CD8-positive, alpha-beta memory T cell (primary cell): ENCODE measurements at regions of chr15 and their contacts with region 1.

Region 1: GRCh38 chr15:80989518-80990478 is at the start of gene MESD:
- DNase-seq: peak; percentile 93 to 97 (median 97)
- H3K4me3 ChIP-seq: peak within 1 kb of the TSS; percentile 72
- H3K4me3 Mint-ChIP-seq: peak within 1 kb of the TSS; percentile 97 to 99 (median 98)
- H3K27ac ChIP-seq: peak within 1 kb of the TSS; percentile 88
- H3K27ac Mint-ChIP-seq: peak within 1 kb of the TSS; percentile 91 to 99 (median 99)
- H3K4me1 ChIP-seq: peaks cover 61% of the 10 kb centered on the region
- H3K4me1 Mint-ChIP-seq: peaks cover 44 to 61% (median 57%) of the 10 kb centered on the region in 3 donors
- H3K27me3 ChIP-seq: no peaks in the 10 kb centered on the region
- H3K27me3 Mint-ChIP-seq: no peaks in the 10 kb centered on the region
- total RNA-seq, gene MESD: 25.7 to 30.5 TPM

Region 2: GRCh38 chr15:80934761-80935221 is 55.0 kb before region 1 on chr15:
- CTCF ChIA-PET with region 1: no interaction called
- POLR2A ChIA-PET with region 1: no interaction called
- DNase-seq: no peak
- H3K4me3 ChIP-seq: no peak overlapping the region
- H3K4me3 Mint-ChIP-seq: no peak overlapping the region
- H3K27ac ChIP-seq: no peak overlapping the region
- H3K27ac Mint-ChIP-seq: no peak overlapping the region
- H3K4me1 ChIP-seq: no peaks in the 10 kb centered on the region
- H3K4me1 Mint-ChIP-seq: peaks cover 0 to 4% (median 4%) of the 10 kb centered on the region in 3 donors
- H3K27me3 ChIP-seq: no peaks in the 10 kb centered on the region
- H3K27me3 Mint-ChIP-seq: no peaks in the 10 kb centered on the region

Region 3: DNA sequence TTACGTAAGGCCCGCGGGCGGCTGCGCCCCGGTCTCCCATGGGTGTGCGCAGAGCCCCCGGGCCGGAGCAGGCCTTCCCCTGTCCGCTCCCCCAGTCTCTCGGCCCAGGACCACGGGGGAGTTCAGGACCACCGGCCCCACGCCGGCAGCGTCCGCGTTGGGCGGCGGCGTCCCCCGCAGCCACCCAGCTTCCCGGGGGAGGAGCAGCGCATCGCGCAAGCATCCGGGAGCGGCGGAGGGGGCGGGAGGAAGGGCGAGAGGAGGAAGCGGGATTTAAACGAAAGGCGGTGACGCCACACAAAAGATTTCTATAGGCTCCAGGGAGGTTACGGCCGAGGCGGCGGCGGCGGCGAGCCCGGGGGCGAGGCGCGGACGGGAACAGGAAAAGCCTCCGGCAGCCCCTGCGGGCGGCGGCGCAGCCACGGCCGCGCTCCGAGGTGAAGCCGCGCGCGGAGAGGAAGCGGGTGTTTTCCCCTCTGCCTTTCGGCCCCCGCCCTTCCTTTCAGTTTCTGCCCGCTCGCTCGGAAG is 10.9 kb after region 1 on chr15 and contains the start of gene TLNRD1:
- CTCF ChIA-PET with region 1: interaction called, 3 read pairs
- POLR2A ChIA-PET with region 1: interaction called, 29 read pairs
- DNase-seq: peak; percentile 72 to 88 (median 82)
- H3K4me3 ChIP-seq: peak within 1 kb of the TSS; percentile 96
- H3K4me3 Mint-ChIP-seq: peak within 1 kb of the TSS; percentile 93 to 99 (median 98)
- H3K27ac ChIP-seq: peak within 1 kb of the TSS; percentile 93
- H3K27ac Mint-ChIP-seq: peak within 1 kb of the TSS; percentile 92 to 99 (median 99)
- H3K4me1 ChIP-seq: peaks cover 46% of the 10 kb centered on the region
- H3K4me1 Mint-ChIP-seq: peaks cover 44 to 52% (median 50%) of the 10 kb centered on the region in 3 donors
- H3K27me3 ChIP-seq: no peaks in the 10 kb centered on the region
- H3K27me3 Mint-ChIP-seq: no peaks in the 10 kb centered on the region
- total RNA-seq, gene TLNRD1: 35.9 to 38.6 TPM